A673 (cell line): ENCODE measurements at regions of chr15 and their contacts with region 1.

Region 1: GRCh38 chr15:33086507-33087121 is 107.9 kb downstream of the FMN1 start:
- DNase-seq: peak; percentile 60
- H3K4me3 ChIP-seq: no peak overlapping the region
- H3K27ac ChIP-seq: no peak overlapping the region
- H3K4me1 ChIP-seq: peaks cover 7% of the 10 kb centered on the region
- H3K27me3 ChIP-seq: peaks cover 12% of the 10 kb centered on the region
- CTCF ChIP-seq: peak; percentile 74

Region 2: GRCh38 chr15:32104061-32104995 is 982.3 kb before region 1 on chr15:
- CTCF ChIA-PET with region 1: no interaction called
- POLR2A ChIA-PET with region 1: no interaction called
- intact Hi-C with region 1: no loop called
- DNase-seq: peak; percentile 4
- H3K4me3 ChIP-seq: no peak overlapping the region
- H3K27ac ChIP-seq: no peak overlapping the region
- H3K4me1 ChIP-seq: no peaks in the 10 kb centered on the region
- H3K27me3 ChIP-seq: peaks cover 5% of the 10 kb centered on the region
- CTCF ChIP-seq: no peak

Region 3: GRCh38 chr15:32698773-32699390 is 387.7 kb before region 1 on chr15:
- CTCF ChIA-PET with region 1: no interaction called
- POLR2A ChIA-PET with region 1: no interaction called
- intact Hi-C with region 1: no loop called
- DNase-seq: no peak
- H3K4me3 ChIP-seq: no peak overlapping the region
- H3K27ac ChIP-seq: no peak overlapping the region
- H3K4me1 ChIP-seq: no peaks in the 10 kb centered on the region
- H3K27me3 ChIP-seq: no peaks in the 10 kb centered on the region
- CTCF ChIP-seq: no peak

Region 4: DNA sequence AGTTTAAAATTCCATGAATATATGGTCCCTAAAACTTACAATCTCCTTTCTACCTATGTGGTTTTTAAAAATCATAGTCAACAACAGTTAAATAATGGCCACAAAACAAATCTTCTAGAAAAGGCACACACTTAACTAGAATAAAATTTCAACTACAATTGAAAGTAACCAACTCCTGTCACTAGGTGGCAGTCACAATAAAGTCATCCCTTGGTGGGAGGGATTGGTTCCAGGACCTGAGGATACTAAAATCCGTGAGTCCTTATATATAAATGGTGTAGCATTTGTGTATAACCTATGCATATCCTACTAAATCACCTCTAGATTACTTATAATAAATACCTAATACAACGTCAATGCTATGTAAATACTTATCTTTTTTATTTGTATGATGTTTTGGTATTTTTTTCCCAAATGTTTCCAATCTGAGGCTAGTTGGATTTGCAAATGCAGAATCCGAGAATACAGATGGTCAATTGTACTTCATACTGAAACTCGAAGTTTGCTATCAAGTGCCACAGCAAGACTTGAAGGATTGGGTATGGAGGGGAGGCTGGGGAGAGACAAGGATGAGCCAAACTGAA is 64.7 kb before region 1 on chr15:
- CTCF ChIA-PET with region 1: no interaction called
- POLR2A ChIA-PET with region 1: no interaction called
- intact Hi-C with region 1: loop called (anchors 5 kb)
- DNase-seq: peak; percentile 66
- H3K4me3 ChIP-seq: no peak overlapping the region
- H3K27ac ChIP-seq: no peak overlapping the region
- H3K4me1 ChIP-seq: no peaks in the 10 kb centered on the region
- H3K27me3 ChIP-seq: no peaks in the 10 kb centered on the region
- CTCF ChIP-seq: peak; percentile 71

Region 5: GRCh38 chr15:33234014-33234461 is 147.4 kb after region 1 on chr15:
- CTCF ChIA-PET with region 1: no interaction called
- POLR2A ChIA-PET with region 1: no interaction called
- intact Hi-C with region 1: loop called (anchors 5 kb)
- DNase-seq: peak; percentile 34
- H3K4me3 ChIP-seq: no peak overlapping the region
- H3K27ac ChIP-seq: no peak overlapping the region
- H3K4me1 ChIP-seq: no peaks in the 10 kb centered on the region
- H3K27me3 ChIP-seq: peaks cover 30% of the 10 kb centered on the region
- CTCF ChIP-seq: peak; percentile 58

Region 6: DNA sequence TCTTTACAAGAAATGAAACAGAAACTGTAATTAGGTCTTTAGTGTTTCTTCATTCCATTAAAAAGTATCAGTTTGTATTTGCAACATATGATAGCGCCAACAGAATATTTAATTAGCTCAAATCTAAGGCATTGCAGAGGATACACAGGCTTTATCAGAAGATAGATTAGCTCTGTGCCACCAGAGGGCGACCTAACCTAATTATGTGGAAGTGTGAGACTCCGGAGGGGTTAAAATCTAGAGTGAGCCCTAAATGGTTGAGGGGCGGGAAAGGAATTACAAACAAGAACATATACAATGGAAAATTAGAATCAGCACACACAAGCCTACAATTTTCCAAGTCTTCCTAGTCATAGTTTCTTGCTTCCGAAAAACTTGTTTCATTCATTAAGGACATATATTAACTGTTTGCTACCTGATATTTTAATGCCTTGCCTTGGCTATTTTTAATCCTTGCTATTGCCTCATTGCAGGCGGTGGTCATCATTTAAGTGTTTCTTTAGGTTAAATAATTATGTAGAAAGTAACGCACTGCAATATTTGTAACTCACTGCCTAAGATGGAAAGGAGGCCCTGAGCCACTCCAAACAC is 206.2 kb after region 1 on chr15:
- CTCF ChIA-PET with region 1: interaction called, 3 read pairs
- POLR2A ChIA-PET with region 1: no interaction called
- intact Hi-C with region 1: loop called (anchors 10 kb)
- DNase-seq: peak; percentile 77
- H3K4me3 ChIP-seq: no peak overlapping the region
- H3K27ac ChIP-seq: no peak overlapping the region
- H3K4me1 ChIP-seq: no peaks in the 10 kb centered on the region
- H3K27me3 ChIP-seq: peaks cover 3% of the 10 kb centered on the region
- CTCF ChIP-seq: peak; percentile 83

Region 7: GRCh38 chr15:33623010-33623409 is 536.4 kb after region 1 on chr15:
- CTCF ChIA-PET with region 1: no interaction called
- POLR2A ChIA-PET with region 1: no interaction called
- intact Hi-C with region 1: no loop called
- DNase-seq: peak; percentile 10
- H3K4me3 ChIP-seq: no peak overlapping the region
- H3K27ac ChIP-seq: no peak overlapping the region
- H3K4me1 ChIP-seq: no peaks in the 10 kb centered on the region
- H3K27me3 ChIP-seq: peaks cover 25% of the 10 kb centered on the region
- CTCF ChIP-seq: peak; percentile 51